ENCODE measurements at regions of chr1 and their contacts with region 1.

Region 1: DNA sequence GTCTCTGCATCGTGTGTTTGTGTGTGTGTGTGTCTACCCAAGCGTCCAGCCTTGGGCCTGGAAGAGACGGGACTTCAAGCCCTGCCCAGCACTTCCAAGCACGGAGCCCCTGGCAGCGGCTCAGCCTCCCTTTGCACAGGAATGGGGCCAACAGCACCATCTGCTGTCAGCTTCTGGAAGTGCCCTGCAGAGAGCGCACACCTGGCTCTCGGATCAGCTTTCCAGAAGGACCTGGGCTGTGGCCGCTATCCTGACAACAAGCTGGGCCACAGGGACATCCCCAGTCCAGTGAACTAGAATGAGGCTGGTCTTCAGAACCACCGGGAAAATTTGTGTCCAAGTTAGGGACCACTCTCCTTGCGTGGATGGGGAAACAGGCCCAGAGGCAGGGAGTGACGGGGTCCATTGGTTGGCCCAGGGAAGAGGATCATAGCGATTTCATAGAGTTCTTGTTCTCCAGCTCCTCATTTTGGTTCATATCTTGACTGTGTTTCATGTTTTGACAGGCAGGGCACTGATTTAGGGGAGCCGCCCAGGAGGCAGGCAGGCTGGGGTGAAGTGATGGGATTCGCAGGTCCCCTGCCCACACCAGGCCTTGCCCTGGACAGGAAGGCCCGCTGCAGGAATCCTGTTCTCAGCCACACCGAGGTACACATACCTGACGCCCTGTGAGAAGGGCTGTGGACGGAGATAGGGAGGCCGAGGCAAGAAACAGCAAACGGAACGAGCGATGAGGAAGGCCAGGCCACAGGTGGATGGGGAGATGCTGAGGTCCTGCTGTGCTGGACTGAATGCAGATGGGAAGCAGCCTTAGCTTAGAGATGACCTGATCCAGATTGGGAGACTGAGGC is 38.4 kb downstream of the TAS1R2 start:
- DNase-seq: peak; percentile 56
- H3K4me3 ChIP-seq: no peak overlapping the region
- H3K27ac ChIP-seq: no peak overlapping the region
- H3K4me1 ChIP-seq: no peaks in the 10 kb centered on the region
- H3K27me3 ChIP-seq: peaks cover 3% of the 10 kb centered on the region in 2 experiments
- CTCF ChIP-seq: peak; percentile 91 to 96
- POLR2A ChIP-seq: no peak

Region 2: GRCh38 chr1:18516473-18516872 is 304.5 kb before region 1 on chr1:
- CTCF ChIA-PET with region 1: no interaction called
- POLR2A ChIA-PET with region 1: no interaction called
- dilution Hi-C with region 1: no loop called
- intact Hi-C with region 1: no loop called
- DNase-seq: no peak
- H3K4me3 ChIP-seq: no peak overlapping the region
- H3K27ac ChIP-seq: no peak overlapping the region
- H3K4me1 ChIP-seq: no peaks in the 10 kb centered on the region
- H3K27me3 ChIP-seq: no peaks in the 10 kb centered on the region
- CTCF ChIP-seq: no peak
- POLR2A ChIP-seq: no peak

Region 3: DNA sequence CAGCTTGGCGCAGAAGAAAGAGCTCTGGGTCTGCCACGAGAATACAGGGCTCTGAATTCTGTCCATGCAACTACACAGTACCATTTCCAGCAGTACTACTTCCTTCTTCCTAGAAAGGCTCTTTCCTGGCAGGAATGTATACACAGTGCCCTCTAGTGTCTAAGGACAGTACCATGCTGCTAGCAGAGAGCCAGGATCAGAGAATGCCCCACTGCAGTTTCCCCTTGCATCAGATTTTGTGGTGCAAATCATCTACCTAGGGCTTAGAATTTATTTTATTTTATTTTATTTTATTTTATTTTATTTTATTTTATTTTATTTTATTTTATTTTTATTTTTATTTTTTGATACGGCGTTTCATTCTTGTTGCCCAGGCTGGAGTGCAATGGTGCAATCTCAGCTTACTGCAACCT is 139.6 kb before region 1 on chr1:
- CTCF ChIA-PET with region 1: no interaction called
- POLR2A ChIA-PET with region 1: no interaction called
- dilution Hi-C with region 1: no loop called
- intact Hi-C with region 1: loop called (anchors 5 kb)
- DNase-seq: no peak
- H3K4me3 ChIP-seq: no peak overlapping the region
- H3K27ac ChIP-seq: no peak overlapping the region
- H3K4me1 ChIP-seq: no peaks in the 10 kb centered on the region
- H3K27me3 ChIP-seq: no peaks in the 10 kb centered on the region
- CTCF ChIP-seq: peak; percentile 31 to 35
- POLR2A ChIP-seq: no peak

Region 4: GRCh38 chr1:18875107-18875795 is 54.2 kb after region 1 on chr1:
- CTCF ChIA-PET with region 1: interaction called, 4 read pairs
- POLR2A ChIA-PET with region 1: no interaction called
- dilution Hi-C with region 1: no loop called
- intact Hi-C with region 1: loop called (anchors 1 kb)
- DNase-seq: peak; percentile 77
- H3K4me3 ChIP-seq: no peak overlapping the region
- H3K27ac ChIP-seq: no peak overlapping the region
- H3K4me1 ChIP-seq: no peaks in the 10 kb centered on the region
- H3K27me3 ChIP-seq: no peaks in the 10 kb centered on the region
- CTCF ChIP-seq: peak; percentile 88 to 97
- POLR2A ChIP-seq: no peak

Region 5: GRCh38 chr1:18922319-18922726 is 101.3 kb after region 1 on chr1:
- CTCF ChIA-PET with region 1: no interaction called
- POLR2A ChIA-PET with region 1: no interaction called
- dilution Hi-C with region 1: no loop called
- intact Hi-C with region 1: no loop called
- DNase-seq: peak; percentile 55
- H3K4me3 ChIP-seq: no peak overlapping the region
- H3K27ac ChIP-seq: peak overlapping the region; percentile 75
- H3K4me1 ChIP-seq: peaks cover 49% of the 10 kb centered on the region
- H3K27me3 ChIP-seq: no peaks in the 10 kb centered on the region
- CTCF ChIP-seq: no peak
- POLR2A ChIP-seq: no peak

Region 6: GRCh38 chr1:19081218-19081893 is 260.3 kb after region 1 on chr1:
- CTCF ChIA-PET with region 1: no interaction called
- POLR2A ChIA-PET with region 1: no interaction called
- dilution Hi-C with region 1: no loop called
- intact Hi-C with region 1: no loop called
- DNase-seq: peak; percentile 52
- H3K4me3 ChIP-seq: no peak overlapping the region
- H3K27ac ChIP-seq: peak overlapping the region; percentile 84
- H3K4me1 ChIP-seq: peaks cover 42% of the 10 kb centered on the region
- H3K27me3 ChIP-seq: no peaks in the 10 kb centered on the region
- CTCF ChIP-seq: no peak
- POLR2A ChIP-seq: no peak